PC-3 (cell line): ENCODE measurements at regions of chr1 and their contacts with region 1.

Region 1: GRCh38 chr1:171313835-171314320 is at the start of gene FMO4:
- DNase-seq: peak; percentile 100
- ATAC-seq: peak; percentile 100
- H3K4me3 ChIP-seq: peak within 1 kb of the TSS; percentile 41
- H3K27ac ChIP-seq: no peak within 1 kb of the TSS
- H3K4me1 ChIP-seq: peaks cover 6% of the 10 kb centered on the region
- H3K27me3 ChIP-seq: peaks cover 21% of the 10 kb centered on the region
- CTCF ChIP-seq: peak; percentile 99
- total RNA-seq, gene FMO4: 0.23 and 0.98 TPM in 2 replicates

Region 2: GRCh38 chr1:170967042-170967910 is 346.6 kb before region 1 on chr1:
- CTCF ChIA-PET with region 1: interaction called, 39 read pairs
- POLR2A ChIA-PET with region 1: interaction called, 5 read pairs
- intact Hi-C with region 1: loop called (anchors 1 kb)
- DNase-seq: peak; percentile 77
- ATAC-seq: peak; percentile 88
- H3K4me3 ChIP-seq: no peak overlapping the region
- H3K27ac ChIP-seq: no peak overlapping the region
- H3K4me1 ChIP-seq: no peaks in the 10 kb centered on the region
- H3K27me3 ChIP-seq: peaks cover 38% of the 10 kb centered on the region
- CTCF ChIP-seq: peak; percentile 92

Region 3: DNA sequence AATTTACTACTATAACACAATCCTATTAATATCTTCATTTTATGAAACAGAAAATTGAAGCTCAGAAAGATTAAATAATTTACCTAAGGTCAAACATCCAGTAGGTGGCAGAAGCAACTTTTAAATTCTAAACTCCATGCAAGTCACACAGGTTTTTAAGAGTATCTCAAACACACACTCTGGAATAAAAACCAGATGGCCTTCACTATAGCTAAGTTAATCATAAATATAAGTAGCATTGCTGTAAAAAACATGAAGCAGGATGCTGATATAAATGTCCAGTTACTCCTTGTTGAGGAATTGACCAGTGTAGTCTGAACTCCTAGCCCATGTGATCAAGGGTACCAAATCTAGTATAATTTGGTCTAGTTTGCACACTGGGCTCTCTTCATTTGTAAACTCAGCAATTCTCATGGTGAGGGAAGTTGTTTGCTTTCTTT is 232.5 kb before region 1 on chr1:
- CTCF ChIA-PET with region 1: interaction called, 13 read pairs
- POLR2A ChIA-PET with region 1: no interaction called
- intact Hi-C with region 1: loop called (anchors 1 kb)
- DNase-seq: peak; percentile 62
- ATAC-seq: peak; percentile 61
- H3K4me3 ChIP-seq: no peak overlapping the region
- H3K27ac ChIP-seq: no peak overlapping the region
- H3K4me1 ChIP-seq: no peaks in the 10 kb centered on the region
- H3K27me3 ChIP-seq: peaks cover 31% of the 10 kb centered on the region
- CTCF ChIP-seq: peak; percentile 79

Region 4: GRCh38 chr1:171245458-171246064 is 68.3 kb before region 1 on chr1:
- CTCF ChIA-PET with region 1: interaction called, 67 read pairs
- POLR2A ChIA-PET with region 1: no interaction called
- intact Hi-C with region 1: loop called (anchors 1 kb)
- DNase-seq: peak; percentile 82
- ATAC-seq: peak; percentile 99
- H3K4me3 ChIP-seq: no peak overlapping the region
- H3K27ac ChIP-seq: no peak overlapping the region
- H3K4me1 ChIP-seq: no peaks in the 10 kb centered on the region
- H3K27me3 ChIP-seq: peaks cover 48% of the 10 kb centered on the region
- CTCF ChIP-seq: peak; percentile 98

Region 5: DNA sequence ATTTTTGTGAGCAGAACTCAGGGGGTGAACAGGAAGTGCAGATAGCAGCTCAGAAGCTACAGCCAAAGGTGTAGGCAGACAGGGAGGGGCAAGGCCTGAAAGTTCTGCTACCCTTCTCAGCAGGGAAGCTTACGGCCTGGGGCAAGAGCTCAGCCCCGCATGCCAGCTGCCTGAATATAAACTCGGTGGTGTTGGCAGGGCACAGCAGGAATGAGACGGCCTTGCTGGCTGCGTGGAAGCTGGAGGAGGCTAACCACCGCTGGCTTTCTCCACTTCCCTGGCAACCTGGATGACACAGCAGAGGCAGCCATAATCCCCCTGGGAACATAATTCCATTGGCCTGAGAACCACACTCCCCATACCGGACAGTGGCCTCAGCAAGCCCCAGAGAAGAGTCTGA is 89.5 kb after region 1 on chr1:
- CTCF ChIA-PET with region 1: interaction called, 8 read pairs
- POLR2A ChIA-PET with region 1: no interaction called
- intact Hi-C with region 1: loop called (anchors 10 kb)
- DNase-seq: peak; percentile 21
- ATAC-seq: no peak
- H3K4me3 ChIP-seq: no peak overlapping the region
- H3K27ac ChIP-seq: no peak overlapping the region
- H3K4me1 ChIP-seq: no peaks in the 10 kb centered on the region
- H3K27me3 ChIP-seq: peaks cover 2% of the 10 kb centered on the region; the same call in 1 of the 2 replicates
- CTCF ChIP-seq: no peak

Region 6: DNA sequence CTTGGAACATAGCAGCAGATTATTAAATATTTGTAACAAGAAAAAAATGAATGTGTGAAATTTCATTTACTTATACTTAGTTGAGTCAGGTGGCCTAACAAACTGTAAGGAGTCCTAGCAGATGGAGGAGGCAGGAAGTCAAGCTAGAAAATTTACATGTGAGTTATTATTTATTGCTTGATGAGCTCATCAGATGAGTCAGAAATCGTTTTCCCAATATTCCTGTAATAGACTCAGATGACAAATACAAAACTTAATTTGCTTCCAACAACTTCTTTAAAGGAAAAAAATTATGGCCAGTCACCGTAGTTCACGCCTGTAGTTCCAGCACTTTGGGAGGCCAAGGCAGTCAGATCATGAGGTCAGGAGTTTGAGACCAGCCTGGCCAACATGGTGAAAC is 127.4 kb after region 1 on chr1:
- CTCF ChIA-PET with region 1: interaction called, 4 read pairs
- POLR2A ChIA-PET with region 1: no interaction called
- intact Hi-C with region 1: loop called (anchors 2 kb)
- DNase-seq: peak; percentile 99
- ATAC-seq: peak; percentile 59
- H3K4me3 ChIP-seq: no peak overlapping the region
- H3K27ac ChIP-seq: peak overlapping the region; percentile 71
- H3K4me1 ChIP-seq: peaks cover 34% of the 10 kb centered on the region
- H3K27me3 ChIP-seq: no peaks in the 10 kb centered on the region
- CTCF ChIP-seq: no peak